Activated B cell treated with CpG ODN at 0.5 μM for 24 hours (primary cell): ENCODE measurements at regions of chr17 and their contacts with region 1.

Region 1: GRCh38 chr17:68435876-68436842 is 21.1 kb downstream of the WIPI1 start:
- DNase-seq: peak; percentile 60
- ATAC-seq: peak; percentile 78
- H3K4me3 Mint-ChIP-seq: no peak overlapping the region
- H3K27ac Mint-ChIP-seq: peak overlapping the region; percentile 54
- H3K4me1 Mint-ChIP-seq: peaks cover 50% of the 10 kb centered on the region
- H3K27me3 Mint-ChIP-seq: no peaks in the 10 kb centered on the region
- CTCF ChIP-seq: peak; percentile 61

Region 2: DNA sequence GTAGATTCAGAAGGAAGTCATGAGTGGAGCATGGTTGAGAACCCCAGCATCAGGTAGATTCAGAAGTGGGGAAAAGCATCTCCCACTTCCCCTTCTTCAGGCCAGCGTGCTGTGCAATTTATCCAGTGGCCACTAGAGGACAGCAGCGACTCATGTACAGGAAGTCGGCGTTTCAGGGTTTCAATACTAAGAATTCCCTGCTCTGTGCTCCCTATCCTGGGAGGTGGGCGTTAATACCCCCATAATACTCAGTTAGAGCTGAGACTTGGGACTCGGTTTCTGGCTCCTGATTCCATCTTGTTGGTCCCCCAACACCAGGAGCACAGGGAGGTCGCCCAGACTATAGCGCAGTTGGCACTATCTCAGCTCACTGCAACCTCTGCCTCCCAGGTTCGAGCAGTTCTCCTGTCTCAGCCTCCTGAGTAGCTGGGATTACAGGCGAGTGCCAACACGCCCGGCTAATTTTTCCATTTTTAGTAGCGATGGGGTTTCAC is 263.7 kb before region 1 on chr17:
- CTCF ChIA-PET with region 1: interaction called, 16 read pairs
- POLR2A ChIA-PET with region 1: no interaction called
- intact Hi-C with region 1: loop called (anchors 1 kb)
- DNase-seq: peak; percentile 58
- ATAC-seq: peak; percentile 97
- H3K4me3 Mint-ChIP-seq: no peak overlapping the region
- H3K27ac Mint-ChIP-seq: no peak overlapping the region
- H3K4me1 Mint-ChIP-seq: peaks cover 6% of the 10 kb centered on the region
- H3K27me3 Mint-ChIP-seq: no peaks in the 10 kb centered on the region
- CTCF ChIP-seq: peak; percentile 91

Region 3: GRCh38 chr17:68247445-68248198 is 188.5 kb before region 1 on chr17 and contains the start of gene AMZ2:
- CTCF ChIA-PET with region 1: no interaction called
- POLR2A ChIA-PET with region 1: interaction called, 24 read pairs
- intact Hi-C with region 1: no loop called
- DNase-seq: peak; percentile 100
- ATAC-seq: peak; percentile 87
- H3K4me3 Mint-ChIP-seq: peak within 1 kb of the TSS; percentile 92
- H3K27ac Mint-ChIP-seq: peak within 1 kb of the TSS; percentile 95
- H3K4me1 Mint-ChIP-seq: peaks cover 53% of the 10 kb centered on the region
- H3K27me3 Mint-ChIP-seq: no peaks in the 10 kb centered on the region
- CTCF ChIP-seq: no peak
- total RNA-seq, gene AMZ2: 42.1 and 55.4 TPM in 2 replicates

Region 4: DNA sequence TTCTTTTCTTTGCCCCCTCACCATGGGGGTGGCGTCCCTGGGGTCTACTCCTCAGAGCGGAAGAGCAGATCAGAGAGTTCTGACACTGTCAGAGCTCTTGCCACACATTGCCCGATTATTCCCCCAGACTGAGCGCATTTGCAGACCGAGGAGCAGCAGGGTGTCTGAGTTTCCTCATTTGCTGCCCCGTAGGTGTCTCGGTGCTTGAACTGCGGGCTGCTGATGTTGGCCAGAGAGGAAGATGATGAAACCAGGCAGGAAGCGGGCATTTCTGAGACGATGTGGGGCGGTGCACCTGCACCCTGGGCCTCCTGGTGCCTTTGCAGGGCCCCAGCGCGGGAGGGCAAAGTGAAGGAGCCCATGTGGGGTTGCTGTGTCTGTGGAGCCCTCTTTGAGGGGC is 89.7 kb before region 1 on chr17:
- CTCF ChIA-PET with region 1: interaction called, 5 read pairs
- POLR2A ChIA-PET with region 1: no interaction called
- intact Hi-C with region 1: loop called (anchors 10 kb)
- DNase-seq: peak; percentile 53
- ATAC-seq: peak; percentile 94
- H3K4me3 Mint-ChIP-seq: peak overlapping the region; percentile 81
- H3K27ac Mint-ChIP-seq: peak overlapping the region; percentile 94
- H3K4me1 Mint-ChIP-seq: peaks cover 38% of the 10 kb centered on the region
- H3K27me3 Mint-ChIP-seq: peaks cover 5% of the 10 kb centered on the region
- CTCF ChIP-seq: no peak